GM18951 (cell line): ENCODE measurements at regions of chr12 and their contacts with region 1.

Region 1: GRCh38 chr12:43882578-43883178 is 46.8 kb downstream of the TMEM117 start:
- POLR2A ChIP-seq: no peak

Region 2: GRCh38 chr12:43444940-43445564 is 437.6 kb before region 1 on chr12:
- in situ Hi-C with region 1: loop called (anchors 25 kb)
- POLR2A ChIP-seq: no peak

Region 3: DNA sequence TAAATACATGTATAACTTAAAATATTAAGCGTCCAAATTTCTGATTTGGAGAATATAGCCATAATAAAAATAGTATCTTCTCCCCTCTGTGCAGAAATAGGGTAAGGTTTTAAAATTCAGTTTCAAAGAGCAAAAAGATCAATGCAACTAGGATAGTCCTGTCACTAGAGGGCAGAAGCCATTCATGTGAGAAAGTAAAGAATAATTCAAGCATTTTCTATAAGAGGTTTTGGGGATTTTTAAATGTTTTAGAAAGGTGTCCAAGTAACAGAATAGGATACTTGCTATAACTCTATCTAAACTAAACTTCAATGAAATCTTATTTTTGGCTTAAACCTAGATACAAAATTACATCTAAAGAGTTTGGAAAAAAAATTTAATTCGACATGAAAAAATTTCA is 381.0 kb before region 1 on chr12:
- in situ Hi-C with region 1: loop called (anchors 25 kb)
- POLR2A ChIP-seq: no peak

Region 4: DNA sequence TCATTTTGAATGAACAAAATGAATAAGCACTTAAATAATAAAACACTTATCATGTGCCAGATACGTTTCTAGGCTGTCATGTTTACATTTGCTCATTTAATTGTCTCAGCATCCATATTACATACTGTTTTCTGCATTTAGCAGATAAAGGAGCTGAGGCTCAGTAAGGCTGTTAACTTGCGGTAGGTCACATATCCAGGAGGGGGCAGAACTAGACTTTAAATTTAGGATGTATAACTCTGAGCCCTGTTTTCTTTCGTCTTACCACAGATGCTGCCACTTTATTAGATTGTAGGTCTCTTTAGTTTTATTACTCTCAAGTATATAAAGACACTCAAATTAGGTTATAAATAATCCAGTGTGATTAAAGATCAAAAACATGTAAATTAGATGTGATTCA is 106.2 kb before region 1 on chr12:
- in situ Hi-C with region 1: loop called (anchors 10 kb)
- POLR2A ChIP-seq: no peak

Region 5: GRCh38 chr12:44184499-44185206 is 302.0 kb after region 1 on chr12:
- in situ Hi-C with region 1: no loop called
- POLR2A ChIP-seq: no peak